Naive thymus-derived CD4-positive, alpha-beta T cell (primary cell): ENCODE measurements at regions of chr4 and their contacts with region 1.

Region 1: GRCh38 chr4:165351359-165352130 is 24.1 kb downstream of the MSMO1 start:
- DNase-seq: no peak
- ATAC-seq: no peak
- H3K4me3 ChIP-seq: no peak overlapping the region
- H3K4me3 Mint-ChIP-seq: no peak overlapping the region
- H3K27ac ChIP-seq: no peak overlapping the region
- H3K27ac Mint-ChIP-seq: no peak overlapping the region
- H3K4me1 ChIP-seq: no peaks in the 10 kb centered on the region
- H3K4me1 Mint-ChIP-seq: peaks cover 0 to 2% (median 0%) of the 10 kb centered on the region in 7 donors
- H3K27me3 ChIP-seq: no peaks in the 10 kb centered on the region
- H3K27me3 Mint-ChIP-seq: peaks cover 0 to 17% (median 7%) of the 10 kb centered on the region in 5 donors

Region 2: GRCh38 chr4:165027762-165028402 is 323.7 kb before region 1 on chr4:
- CTCF ChIA-PET with region 1: no interaction called
- POLR2A ChIA-PET with region 1: no interaction called
- intact Hi-C with region 1: no loop called
- DNase-seq: no peak
- ATAC-seq: no peak
- H3K4me3 ChIP-seq: no peak overlapping the region
- H3K4me3 Mint-ChIP-seq: no peak overlapping the region
- H3K27ac ChIP-seq: no peak overlapping the region
- H3K27ac Mint-ChIP-seq: no peak overlapping the region
- H3K4me1 ChIP-seq: no peaks in the 10 kb centered on the region
- H3K4me1 Mint-ChIP-seq: no peaks in the 10 kb centered on the region
- H3K27me3 ChIP-seq: no peaks in the 10 kb centered on the region
- H3K27me3 Mint-ChIP-seq: peaks cover 0 to 14% (median 5%) of the 10 kb centered on the region in 5 donors

Region 3: DNA sequence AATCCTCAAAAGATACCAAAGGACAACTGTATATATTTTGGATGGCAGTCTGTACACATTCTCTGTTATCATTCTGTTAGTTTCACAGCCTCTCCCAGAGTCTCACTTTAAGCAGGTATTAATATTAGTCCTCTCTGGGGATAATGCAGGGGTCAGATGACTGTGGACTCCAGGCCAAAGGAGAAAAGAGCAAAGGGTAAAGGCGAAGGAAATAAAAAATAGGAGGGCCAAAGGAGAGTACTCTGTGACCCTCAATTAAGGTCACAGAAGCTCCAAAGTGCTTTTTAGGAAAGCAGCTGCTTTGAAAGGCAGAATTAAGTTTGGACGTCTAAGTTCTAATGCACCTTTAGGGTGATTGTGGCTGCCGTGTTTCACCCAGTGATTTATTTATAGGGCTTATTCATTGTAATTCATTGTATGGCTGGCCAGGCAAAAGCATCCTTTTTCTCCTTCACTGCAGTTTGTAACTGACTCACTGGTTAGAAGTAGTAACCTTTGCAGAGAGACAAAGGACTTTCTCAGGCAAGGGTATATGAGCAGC is 16.3 kb before region 1 on chr4:
- CTCF ChIA-PET with region 1: no interaction called
- POLR2A ChIA-PET with region 1: no interaction called
- intact Hi-C with region 1: no loop called
- DNase-seq: no peak
- ATAC-seq: no peak
- H3K4me3 ChIP-seq: no peak overlapping the region
- H3K4me3 Mint-ChIP-seq: no peak overlapping the region
- H3K27ac ChIP-seq: no peak overlapping the region
- H3K27ac Mint-ChIP-seq: peak overlapping the region in 7 of 9 donors; percentile 21 to 69 (median 40)
- H3K4me1 ChIP-seq: peaks cover 0 to 5% of the 10 kb centered on the region in 2 donors
- H3K4me1 Mint-ChIP-seq: peaks cover 25 to 51% (median 46%) of the 10 kb centered on the region in 7 donors
- H3K27me3 ChIP-seq: no peaks in the 10 kb centered on the region
- H3K27me3 Mint-ChIP-seq: no peaks in the 10 kb centered on the region

Region 4: GRCh38 chr4:165464813-165465381 is 113.4 kb after region 1 on chr4:
- CTCF ChIA-PET with region 1: interaction called, 6 read pairs
- POLR2A ChIA-PET with region 1: no interaction called
- intact Hi-C with region 1: loop called (anchors 5 to 10 kb)
- DNase-seq: peak in 7 of 9 donors; percentile 7 to 59 (median 39)
- ATAC-seq: peak; percentile 76
- H3K4me3 ChIP-seq: no peak overlapping the region
- H3K4me3 Mint-ChIP-seq: no peak overlapping the region
- H3K27ac ChIP-seq: no peak overlapping the region
- H3K27ac Mint-ChIP-seq: no peak overlapping the region
- H3K4me1 ChIP-seq: no peaks in the 10 kb centered on the region
- H3K4me1 Mint-ChIP-seq: no peaks in the 10 kb centered on the region
- H3K27me3 ChIP-seq: no peaks in the 10 kb centered on the region
- H3K27me3 Mint-ChIP-seq: peaks cover 0 to 6% (median 5%) of the 10 kb centered on the region in 5 donors